Body of pancreas (tissue), 4 donors: ENCODE measurements at regions of chr1 and their contacts with region 1.

Region 1: DNA sequence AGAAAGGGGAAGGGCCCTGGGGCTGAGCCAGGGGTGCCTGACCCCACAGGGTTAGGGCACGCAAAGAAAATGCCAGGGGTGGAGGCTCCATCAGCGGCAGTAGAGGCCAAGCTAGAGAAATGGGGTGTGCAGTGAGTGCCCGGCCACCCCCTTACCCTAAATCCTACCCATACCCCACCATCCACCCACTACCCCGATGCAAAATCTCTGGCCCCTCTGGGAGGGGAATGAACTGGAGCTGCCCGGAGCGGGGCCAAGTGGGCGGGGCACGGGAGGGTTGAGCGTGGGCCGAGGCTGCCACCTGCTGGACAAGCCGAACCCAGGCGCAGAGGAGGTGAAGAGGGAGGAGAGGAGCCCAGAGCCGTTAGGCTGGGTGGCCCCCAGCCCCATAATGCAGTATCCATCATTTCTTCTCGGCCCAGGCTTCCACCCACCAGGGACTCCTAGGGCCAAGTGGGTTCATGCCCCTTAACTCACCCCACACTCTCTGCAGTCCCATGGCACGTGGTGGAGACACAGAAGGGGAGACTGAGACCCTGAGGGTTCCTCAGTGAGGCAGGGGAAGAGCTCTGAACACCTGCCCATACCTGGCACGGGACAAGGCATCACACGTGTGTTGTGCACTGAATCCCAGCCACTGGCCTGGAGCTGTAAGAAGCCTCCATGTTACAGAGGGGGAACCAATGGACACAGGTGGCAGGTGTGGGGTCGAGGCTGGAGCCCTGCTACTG is 1.4 kb upstream of the C1QC start:
- DNase-seq: peak; percentile 85 to 92 (median 89)
- ATAC-seq: peak; percentile 85
- H3K4me3 ChIP-seq: no peak overlapping the region
- H3K27ac ChIP-seq: no peak overlapping the region
- H3K4me1 ChIP-seq: peaks cover 5% of the 10 kb centered on the region
- H3K27me3 ChIP-seq: no peaks in the 10 kb centered on the region
- CTCF ChIP-seq: peak; percentile 80 to 93 (median 91)
- POLR2A ChIP-seq: no peak

Region 2: DNA sequence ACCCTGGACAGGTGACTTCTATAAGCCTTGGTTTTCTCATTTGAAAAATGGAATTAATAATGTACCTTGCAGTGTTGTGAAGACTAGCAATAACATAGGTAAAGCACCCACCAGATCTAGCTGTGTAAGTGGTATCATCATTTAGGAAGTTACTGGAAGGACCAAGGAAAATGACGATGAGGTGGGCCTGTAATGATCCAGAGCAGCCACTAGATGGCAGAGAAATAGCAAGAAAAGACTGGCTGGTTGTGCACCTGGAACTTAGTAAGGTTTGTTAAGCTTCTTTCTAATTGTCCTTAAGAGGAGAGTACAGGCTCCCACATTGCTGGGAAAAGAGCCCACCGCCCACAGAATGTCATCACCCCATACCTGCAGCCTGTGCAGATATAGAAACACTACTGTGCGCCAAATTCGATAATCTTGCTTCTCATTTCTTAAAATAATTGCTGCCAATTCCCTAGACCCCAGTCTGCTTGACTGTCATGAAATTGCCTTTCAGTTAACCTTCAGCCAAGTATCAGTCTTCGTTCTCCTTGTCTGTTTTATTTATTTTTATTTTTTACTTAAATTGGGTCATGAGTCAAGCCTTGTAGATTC is 536.4 kb before region 1 on chr1:
- intact Hi-C with region 1: loop called (anchors 10 kb)
- DNase-seq: peak in 3 of 4 donors; percentile 46 to 53 (median 47)
- ATAC-seq: peak; percentile 69
- H3K4me3 ChIP-seq: no peak overlapping the region
- H3K27ac ChIP-seq: no peak overlapping the region
- H3K4me1 ChIP-seq: no peaks in the 10 kb centered on the region
- H3K27me3 ChIP-seq: no peaks in the 10 kb centered on the region
- CTCF ChIP-seq: peak; percentile 40 to 81 (median 78)
- POLR2A ChIP-seq: no peak

Region 3: GRCh38 chr1:22328331-22329152 is 313.5 kb before region 1 on chr1:
- intact Hi-C with region 1: no loop called
- DNase-seq: peak in 1 of 4 donors; percentile 4
- ATAC-seq: no peak
- H3K4me3 ChIP-seq: no peak overlapping the region
- H3K27ac ChIP-seq: no peak overlapping the region
- H3K4me1 ChIP-seq: no peaks in the 10 kb centered on the region
- H3K27me3 ChIP-seq: no peaks in the 10 kb centered on the region
- CTCF ChIP-seq: no peak
- POLR2A ChIP-seq: no peak

Region 4: GRCh38 chr1:22416555-22417454 is 225.3 kb before region 1 on chr1:
- intact Hi-C with region 1: loop called (anchors 2 kb)
- DNase-seq: peak; percentile 80 to 88 (median 84)
- ATAC-seq: peak; percentile 43
- H3K4me3 ChIP-seq: no peak overlapping the region
- H3K27ac ChIP-seq: peak overlapping the region in 1 of 4 donors; percentile 10
- H3K4me1 ChIP-seq: peaks cover 52% of the 10 kb centered on the region
- H3K27me3 ChIP-seq: no peaks in the 10 kb centered on the region
- CTCF ChIP-seq: peak; percentile 92 to 98 (median 96)
- POLR2A ChIP-seq: no peak

Region 5: DNA sequence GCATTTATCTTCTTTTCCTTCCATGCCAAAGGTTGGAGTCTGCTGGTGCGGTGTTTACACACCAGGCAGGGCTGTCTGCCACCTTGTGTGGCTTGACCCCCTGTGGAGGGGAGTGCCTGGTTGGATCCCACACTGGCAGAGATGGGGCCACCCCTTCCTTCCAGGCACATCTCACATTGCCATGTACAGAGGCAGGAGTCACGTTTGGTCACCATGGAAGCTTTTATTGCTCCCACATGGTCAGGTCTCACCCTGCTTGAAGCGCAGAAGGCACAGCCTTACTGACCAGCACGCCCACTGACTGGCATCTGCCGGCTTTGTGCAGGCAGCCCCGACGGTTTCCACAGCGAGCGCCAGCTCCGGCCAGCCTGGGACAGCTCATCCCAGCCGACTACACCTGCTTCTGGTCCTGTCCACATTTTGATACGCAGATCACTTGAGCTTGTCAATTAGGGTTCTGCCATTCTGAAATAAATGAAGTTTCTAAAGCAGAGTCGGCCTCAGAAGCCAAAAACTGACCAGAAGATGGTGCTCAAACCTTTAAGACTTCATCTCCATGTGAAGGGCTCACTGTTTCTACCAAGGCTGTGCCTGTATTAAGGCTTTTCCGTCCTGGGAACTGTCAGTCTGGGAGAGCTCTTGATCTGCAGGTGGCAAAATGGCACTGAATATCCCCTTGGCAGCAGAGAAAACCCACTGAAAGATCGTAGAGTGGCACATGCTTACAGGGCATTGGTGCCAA is 114.3 kb before region 1 on chr1:
- intact Hi-C with region 1: loop called (anchors 10 kb)
- DNase-seq: peak in 3 of 4 donors; percentile 39 to 57 (median 51)
- ATAC-seq: no peak
- H3K4me3 ChIP-seq: no peak overlapping the region
- H3K27ac ChIP-seq: peak overlapping the region in 3 of 4 donors; percentile 68 to 83 (median 78)
- H3K4me1 ChIP-seq: peaks cover 70% of the 10 kb centered on the region
- H3K27me3 ChIP-seq: no peaks in the 10 kb centered on the region
- CTCF ChIP-seq: peak in 5 of 7 experiments; percentile 9 to 62 (median 46)
- POLR2A ChIP-seq: no peak